Tibial artery (tissue), 4 donors: ENCODE measurements at regions of chr16 and their contacts with region 1.

Region 1: GRCh38 chr16:48623304-48624016 is 13.5 kb upstream of the N4BP1 start:
- DNase-seq: peak; percentile 78 to 91
- H3K4me3 ChIP-seq: peak overlapping the region; percentile 49 to 56
- H3K27ac ChIP-seq: peak overlapping the region; percentile 68
- H3K4me1 ChIP-seq: peaks cover 0 to 18% (median 6%) of the 10 kb centered on the region in 4 donors
- H3K27me3 ChIP-seq: no peaks in the 10 kb centered on the region
- CTCF ChIP-seq: peak; percentile 95 to 99

Region 2: GRCh38 chr16:48231727-48232492 is 391.6 kb before region 1 on chr16:
- intact Hi-C with region 1: loop called (anchors 10 kb)
- DNase-seq: no peak
- H3K4me3 ChIP-seq: no peak overlapping the region
- H3K27ac ChIP-seq: no peak overlapping the region
- H3K4me1 ChIP-seq: no peaks in the 10 kb centered on the region
- H3K27me3 ChIP-seq: no peaks in the 10 kb centered on the region
- CTCF ChIP-seq: peak; percentile 14 to 22

Region 3: GRCh38 chr16:48330841-48331192 is 292.6 kb before region 1 on chr16:
- intact Hi-C with region 1: no loop called
- DNase-seq: no peak
- H3K4me3 ChIP-seq: no peak overlapping the region
- H3K27ac ChIP-seq: no peak overlapping the region
- H3K4me1 ChIP-seq: peaks cover 0 to 14% (median 2%) of the 10 kb centered on the region in 4 donors
- H3K27me3 ChIP-seq: no peaks in the 10 kb centered on the region
- CTCF ChIP-seq: no peak

Region 4: DNA sequence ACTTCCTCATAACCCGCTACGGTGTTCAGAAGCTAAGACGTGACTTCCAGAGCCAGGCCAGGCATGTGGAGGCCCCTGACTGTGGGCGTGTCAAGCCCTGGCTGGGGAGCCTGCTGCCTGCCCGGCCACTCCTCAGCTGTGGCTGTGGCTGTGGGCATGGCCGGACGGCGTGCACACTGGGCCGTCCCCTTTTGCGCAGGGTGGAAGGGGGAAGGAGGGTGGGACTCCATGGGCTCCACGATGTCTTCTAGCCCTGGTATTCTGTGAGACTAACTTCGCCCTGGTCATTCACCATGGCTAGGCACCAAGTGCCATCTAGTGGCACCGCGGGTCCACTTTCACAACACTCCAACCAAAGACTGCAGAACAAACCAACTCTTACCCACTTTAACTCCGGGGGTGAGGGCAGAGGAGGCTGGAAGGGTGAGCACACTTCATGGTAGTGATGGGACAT is 81.4 kb before region 1 on chr16:
- intact Hi-C with region 1: loop called (anchors 10 kb)
- DNase-seq: peak; percentile 70 to 83
- H3K4me3 ChIP-seq: no peak overlapping the region
- H3K27ac ChIP-seq: peak overlapping the region in 1 of 2 donors; percentile 15
- H3K4me1 ChIP-seq: peaks cover 0 to 30% (median 24%) of the 10 kb centered on the region in 4 donors
- H3K27me3 ChIP-seq: no peaks in the 10 kb centered on the region
- CTCF ChIP-seq: peak; percentile 68